ENCODE measurements at regions of chr2 and their contacts with region 1.

Region 1: DNA sequence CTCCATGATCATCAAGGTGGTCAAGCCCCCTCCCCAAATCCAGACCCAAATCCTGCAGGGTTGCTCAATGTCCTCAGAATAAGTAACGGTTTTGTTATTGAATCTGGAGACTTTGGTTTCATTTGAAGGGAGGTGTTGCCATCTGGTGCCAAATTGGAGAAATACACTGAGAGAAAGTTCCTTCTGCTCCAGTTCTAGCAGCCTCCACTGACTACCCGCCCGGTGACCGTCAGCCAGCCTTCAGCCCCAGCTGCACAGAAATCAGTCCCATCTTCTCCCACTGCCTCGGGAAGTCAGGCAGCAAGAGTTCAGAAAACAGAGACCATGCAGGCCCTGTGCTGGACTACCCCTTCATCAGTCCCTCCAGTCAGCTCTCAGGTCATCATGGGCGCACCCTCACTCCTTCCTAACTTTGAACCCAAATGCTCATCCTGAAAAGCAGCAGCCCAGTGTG is 38.7 kb downstream of the PKDCC start:
- DNase-seq: no peak

Region 2: GRCh38 chr2:41853427-41854216 is 232.9 kb before region 1 on chr2:
- intact Hi-C with region 1: loop called (anchors 1 kb)
- DNase-seq: no peak

Region 3: GRCh38 chr2:42047488-42048298 is 38.8 kb before region 1 on chr2 and contains the start of gene PKDCC:
- intact Hi-C with region 1: no loop called
- DNase-seq: peak; percentile 89
- total RNA-seq, gene PKDCC: 74.7 TPM

Region 4: GRCh38 chr2:42360890-42361727 is 274.6 kb after region 1 on chr2 and contains the start of gene COX7A2L:
- intact Hi-C with region 1: no loop called
- DNase-seq: peak; percentile 99
- total RNA-seq, gene COX7A2L: 94.6 TPM

Measured in cardiac septum (tissue), 1 donor.